A549 (cell line): ENCODE measurements at regions of chr2 and their contacts with region 1.

Region 1: GRCh38 chr2:219057709-219058540 is 2.8 kb downstream of the IHH start:
- DNase-seq: peak in 1 of 2 experiments; percentile 60
- ATAC-seq: peak; percentile 72 to 86
- H3K4me3 ChIP-seq: peak overlapping the region; percentile 53; the same call in 2 of the 3 replicates
- H3K27ac ChIP-seq: no peak overlapping the region
- H3K4me1 ChIP-seq: peaks cover 26% of the 10 kb centered on the region
- CTCF ChIP-seq: peak; percentile 80
- EP300 ChIP-seq: no peak
- POLR2A ChIP-seq: no peak
- RAD21 ChIP-seq: peak; percentile 80 to 91

Region 2: GRCh38 chr2:218995972-218996711 is 61.8 kb before region 1 on chr2:
- CTCF ChIA-PET with region 1: interaction called, 38 read pairs
- POLR2A ChIA-PET with region 1: no interaction called
- DNase-seq: peak; percentile 87
- ATAC-seq: peak; percentile 78 to 93
- H3K4me3 ChIP-seq: peak overlapping the region; percentile 49
- H3K27ac ChIP-seq: peak overlapping the region; percentile 79 to 84
- H3K4me1 ChIP-seq: peaks cover 10% of the 10 kb centered on the region
- CTCF ChIP-seq: peak; percentile 87
- EP300 ChIP-seq: no peak
- POLR2A ChIP-seq: peak; percentile 84
- RAD21 ChIP-seq: peak; percentile 74 to 80

Region 3: GRCh38 chr2:219041252-219041651 is 16.7 kb before region 1 on chr2 and contains the start of gene CFAP65:
- CTCF ChIA-PET with region 1: interaction called, 97 read pairs
- POLR2A ChIA-PET with region 1: no interaction called
- DNase-seq: peak; percentile 53 to 68
- ATAC-seq: peak; percentile 75 to 85
- H3K4me3 ChIP-seq: peak within 1 kb of the TSS; percentile 49
- H3K27ac ChIP-seq: no peak within 1 kb of the TSS
- H3K4me1 ChIP-seq: peaks cover 3% of the 10 kb centered on the region; the same call in 1 of the 3 replicates
- CTCF ChIP-seq: no peak
- EP300 ChIP-seq: no peak
- POLR2A ChIP-seq: no peak
- RAD21 ChIP-seq: no peak
- polyA plus RNA-seq, gene CFAP65: 0.09 and 0.12 TPM in 2 replicates

Region 4: GRCh38 chr2:219087361-219087760 is 29.4 kb after region 1 on chr2:
- CTCF ChIA-PET with region 1: interaction called, 15 read pairs
- POLR2A ChIA-PET with region 1: no interaction called
- DNase-seq: no peak
- ATAC-seq: no peak
- H3K4me3 ChIP-seq: no peak overlapping the region
- H3K27ac ChIP-seq: no peak overlapping the region
- H3K4me1 ChIP-seq: no peaks in the 10 kb centered on the region
- CTCF ChIP-seq: no peak
- EP300 ChIP-seq: no peak
- POLR2A ChIP-seq: no peak
- RAD21 ChIP-seq: no peak

Region 5: GRCh38 chr2:219111375-219112061 is 53.6 kb after region 1 on chr2:
- CTCF ChIA-PET with region 1: interaction called, 173 read pairs
- POLR2A ChIA-PET with region 1: no interaction called
- DNase-seq: no peak
- ATAC-seq: no peak
- H3K4me3 ChIP-seq: no peak overlapping the region
- H3K27ac ChIP-seq: no peak overlapping the region
- H3K4me1 ChIP-seq: peaks cover 11% of the 10 kb centered on the region; the same call in 2 of the 3 replicates
- CTCF ChIP-seq: no peak
- EP300 ChIP-seq: no peak
- POLR2A ChIP-seq: no peak
- RAD21 ChIP-seq: no peak

Region 6: DNA sequence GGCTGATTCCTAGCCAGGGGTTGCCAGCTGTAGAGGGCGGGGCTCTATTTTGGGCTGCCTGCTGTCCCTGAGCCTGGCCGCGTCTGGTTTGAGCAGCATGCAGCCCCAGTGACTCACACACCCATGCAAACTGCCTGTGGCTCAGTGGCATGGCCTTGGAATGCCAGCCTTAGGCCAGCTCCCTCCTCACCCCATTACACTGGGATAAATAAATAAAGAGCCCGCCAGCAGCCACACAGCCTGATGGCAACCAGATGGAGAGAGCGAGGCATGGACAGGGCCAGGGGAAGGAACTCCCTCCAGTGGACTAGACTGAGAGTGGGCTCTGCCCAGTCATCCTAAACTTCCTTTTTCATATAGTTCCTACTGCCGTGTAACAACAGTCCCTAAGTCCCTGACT is 84.4 kb after region 1 on chr2:
- CTCF ChIA-PET with region 1: interaction called, 332 read pairs
- POLR2A ChIA-PET with region 1: no interaction called
- DNase-seq: no peak
- ATAC-seq: peak; percentile 68 to 70; a peak in 4 of 6 replicates
- H3K4me3 ChIP-seq: no peak overlapping the region
- H3K27ac ChIP-seq: no peak overlapping the region
- H3K4me1 ChIP-seq: peaks cover 5% of the 10 kb centered on the region; the same call in 1 of the 3 replicates
- CTCF ChIP-seq: no peak
- EP300 ChIP-seq: no peak
- POLR2A ChIP-seq: no peak
- RAD21 ChIP-seq: no peak